AG04450 (cell line): ENCODE measurements at regions of chr5 and their contacts with region 1.

Region 1: GRCh38 chr5:132820162-132820754 is 7.2 kb downstream of the SOWAHA start:
- DNase-seq: peak; percentile 85
- H3K4me3 ChIP-seq: no peak overlapping the region
- H3K27ac ChIP-seq: peak overlapping the region; percentile 39
- H3K27me3 ChIP-seq: no peaks in the 10 kb centered on the region
- CTCF ChIP-seq: peak; percentile 95

Region 2: GRCh38 chr5:132386644-132387286 is 433.5 kb before region 1 on chr5:
- CTCF ChIA-PET with region 1: interaction called, 66 read pairs
- POLR2A ChIA-PET with region 1: no interaction called
- DNase-seq: no peak
- H3K4me3 ChIP-seq: no peak overlapping the region
- H3K27ac ChIP-seq: peak overlapping the region; percentile 43
- H3K27me3 ChIP-seq: no peaks in the 10 kb centered on the region
- CTCF ChIP-seq: peak; percentile 86

Region 3: GRCh38 chr5:132661231-132662003 is 158.8 kb before region 1 on chr5:
- CTCF ChIA-PET with region 1: interaction called, 11 read pairs
- POLR2A ChIA-PET with region 1: no interaction called
- DNase-seq: no peak
- H3K4me3 ChIP-seq: no peak overlapping the region
- H3K27ac ChIP-seq: no peak overlapping the region
- H3K27me3 ChIP-seq: peaks cover 3% of the 10 kb centered on the region
- CTCF ChIP-seq: peak; percentile 9; the same call in 1 of the 2 replicates

Region 4: GRCh38 chr5:132714456-132715307 is 105.6 kb before region 1 on chr5:
- CTCF ChIA-PET with region 1: interaction called, 10 read pairs
- POLR2A ChIA-PET with region 1: no interaction called
- DNase-seq: no peak
- H3K4me3 ChIP-seq: no peak overlapping the region
- H3K27ac ChIP-seq: no peak overlapping the region
- H3K27me3 ChIP-seq: no peaks in the 10 kb centered on the region
- CTCF ChIP-seq: peak; percentile 47

Region 5: GRCh38 chr5:132777209-132778069 is 42.8 kb before region 1 on chr5 and contains the start of gene SEPTIN8:
- CTCF ChIA-PET with region 1: interaction called, 11 read pairs
- POLR2A ChIA-PET with region 1: no interaction called
- DNase-seq: no peak
- H3K4me3 ChIP-seq: peak within 1 kb of the TSS; percentile 79
- H3K27ac ChIP-seq: no peak within 1 kb of the TSS
- H3K27me3 ChIP-seq: no peaks in the 10 kb centered on the region
- CTCF ChIP-seq: no peak
- polyA plus RNA-seq, gene SEPTIN8: 62.4 and 70.0 TPM in 2 replicates

Region 6: GRCh38 chr5:132839426-132840301 is 19.4 kb after region 1 on chr5:
- CTCF ChIA-PET with region 1: interaction called, 18 read pairs
- POLR2A ChIA-PET with region 1: no interaction called
- DNase-seq: peak; percentile 41
- H3K4me3 ChIP-seq: no peak overlapping the region
- H3K27ac ChIP-seq: peak overlapping the region; percentile 95
- H3K27me3 ChIP-seq: no peaks in the 10 kb centered on the region
- CTCF ChIP-seq: no peak

Region 7: DNA sequence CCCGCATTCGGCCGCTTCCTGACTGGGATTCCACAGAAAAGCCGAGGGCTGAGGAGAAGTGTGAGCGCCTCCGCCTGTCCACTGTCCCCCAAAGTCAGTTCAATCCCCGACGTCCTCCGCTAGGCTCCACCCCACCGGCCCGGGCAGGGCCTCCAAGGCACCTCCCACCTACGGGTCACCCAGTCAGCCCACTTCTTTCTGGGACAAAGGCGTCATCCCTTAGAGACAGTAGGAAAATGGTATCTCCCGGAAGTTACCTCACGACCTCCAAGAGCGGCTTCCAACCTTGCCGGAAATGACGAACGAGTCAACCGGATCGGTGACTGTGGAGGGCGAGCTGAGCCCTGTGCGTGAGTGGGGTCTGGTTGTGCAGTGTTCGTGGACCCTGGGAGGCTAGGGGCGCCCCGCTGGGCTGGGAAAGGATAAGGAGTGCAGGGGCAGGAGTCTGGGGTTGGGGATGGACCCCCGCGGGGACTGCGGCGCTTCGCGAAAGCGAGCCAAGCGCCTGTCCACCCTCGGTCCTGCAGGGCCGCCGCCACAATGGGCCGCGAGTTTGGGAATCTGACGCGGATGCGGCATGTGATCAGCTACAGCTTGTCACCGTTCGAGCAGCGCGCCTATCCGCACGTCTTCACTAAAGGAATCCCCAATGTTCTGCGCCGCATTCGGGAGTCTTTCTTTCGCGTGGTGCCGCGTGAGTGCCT is 46.2 kb after region 1 on chr5 and contains the starts of genes GDF9 and UQCRQ:
- CTCF ChIA-PET with region 1: interaction called, 11 read pairs
- POLR2A ChIA-PET with region 1: interaction called, 4 read pairs
- DNase-seq: peak; percentile 99
- H3K4me3 ChIP-seq: peak within 1 kb of the TSS; percentile 97
- H3K27ac ChIP-seq: peak within 1 kb of the TSS; percentile 94
- H3K27me3 ChIP-seq: no peaks in the 10 kb centered on the region
- CTCF ChIP-seq: peak; percentile 42
- polyA plus RNA-seq, gene GDF9: 0.14 and 0.15 TPM in 2 replicates
- polyA plus RNA-seq, gene UQCRQ: 318 and 329 TPM in 2 replicates